ENCODE measurements at regions of chr1 and their contacts with region 1.

Region 1: DNA sequence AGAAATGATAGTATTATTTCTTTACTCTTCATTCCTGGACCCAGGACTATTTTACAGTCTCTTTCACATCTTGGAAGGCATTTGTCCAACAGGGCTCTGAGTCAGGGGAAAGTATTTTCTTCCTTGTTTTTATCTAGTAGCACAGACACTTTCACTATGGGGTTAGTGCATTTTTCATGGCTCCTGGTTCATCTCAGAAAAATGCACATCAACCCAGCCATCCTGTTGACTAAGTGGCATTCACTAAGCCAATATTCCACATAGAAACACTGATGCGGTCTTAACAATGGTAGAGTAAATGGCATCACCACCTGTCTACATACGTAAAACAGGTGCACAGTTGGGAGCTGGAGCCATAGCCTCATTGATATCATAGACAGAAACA is 87.4 kb upstream of the C1orf21 start:
- DNase-seq: no peak
- H3K4me3 Mint-ChIP-seq: no peak overlapping the region
- H3K27ac Mint-ChIP-seq: no peak overlapping the region
- H3K4me1 Mint-ChIP-seq: no peaks in the 10 kb centered on the region
- H3K27me3 Mint-ChIP-seq: peaks cover 10% of the 10 kb centered on the region

Region 2: GRCh38 chr1:184354719-184355118 is 55.3 kb after region 1 on chr1:
- intact Hi-C with region 1: loop called (anchors 2 kb)
- DNase-seq: no peak
- H3K4me3 Mint-ChIP-seq: no peak overlapping the region
- H3K27ac Mint-ChIP-seq: no peak overlapping the region
- H3K4me1 Mint-ChIP-seq: no peaks in the 10 kb centered on the region
- H3K27me3 Mint-ChIP-seq: peaks cover 10% of the 10 kb centered on the region